B cell (primary cell): ENCODE measurements at regions of chr7 and their contacts with region 1.

Region 1: GRCh38 chr7:2529161-2530070 is 9.8 kb downstream of the LFNG start:
- DNase-seq: peak; percentile 94
- ATAC-seq: peak; percentile 65
- H3K4me3 ChIP-seq: peak overlapping the region in 4 of 5 experiments; percentile 38 to 52 (median 43)
- H3K4me3 Mint-ChIP-seq: peak overlapping the region; percentile 90
- H3K27ac ChIP-seq: peak overlapping the region; percentile 97
- H3K27ac Mint-ChIP-seq: peak overlapping the region; percentile 99
- H3K4me1 ChIP-seq: peaks cover 66 to 74% of the 10 kb centered on the region in 2 donors
- H3K4me1 Mint-ChIP-seq: peaks cover 67% of the 10 kb centered on the region
- H3K27me3 ChIP-seq: no peaks in the 10 kb centered on the region
- H3K27me3 Mint-ChIP-seq: no peaks in the 10 kb centered on the region
- CTCF ChIP-seq: no peak

Region 2: DNA sequence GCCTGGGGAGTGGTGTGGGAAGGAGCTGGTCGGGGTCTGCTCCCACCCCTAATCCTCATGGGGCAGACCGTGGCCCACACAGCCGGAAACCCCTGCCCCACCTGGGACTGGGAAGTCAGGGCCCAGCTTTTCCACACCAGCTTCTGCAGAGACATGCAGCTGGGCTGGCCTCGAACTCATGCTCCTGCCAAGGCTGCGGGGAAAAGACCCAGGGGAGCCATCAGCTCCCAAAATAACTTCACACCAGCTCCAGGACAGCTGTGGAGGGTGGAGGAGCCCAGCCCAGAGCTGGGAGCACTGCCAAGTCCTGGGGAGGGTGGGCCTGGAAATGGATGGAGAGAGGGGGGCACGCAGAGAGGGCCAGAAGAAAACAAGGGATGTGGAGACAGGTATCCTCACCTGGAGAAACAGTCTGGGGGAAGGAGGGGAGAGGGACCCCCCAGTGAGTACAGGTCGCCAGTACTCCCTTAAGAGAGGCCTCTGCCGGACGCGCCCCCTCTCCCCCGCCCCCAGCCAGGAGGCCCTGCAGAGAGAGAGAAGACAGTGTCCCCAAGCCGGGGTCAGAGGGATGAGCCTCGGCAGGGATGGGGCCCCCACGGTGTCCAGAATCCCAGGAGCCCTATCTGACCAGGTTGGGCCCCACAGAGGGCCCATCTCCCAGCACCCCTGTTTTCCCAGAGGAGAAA is 41.7 kb before region 1 on chr7:
- CTCF ChIA-PET with region 1: no interaction called
- POLR2A ChIA-PET with region 1: interaction called, 13 read pairs
- intact Hi-C with region 1: no loop called
- DNase-seq: no peak
- ATAC-seq: no peak
- H3K4me3 ChIP-seq: no peak overlapping the region
- H3K4me3 Mint-ChIP-seq: no peak overlapping the region
- H3K27ac ChIP-seq: no peak overlapping the region
- H3K27ac Mint-ChIP-seq: no peak overlapping the region
- H3K4me1 ChIP-seq: no peaks in the 10 kb centered on the region
- H3K4me1 Mint-ChIP-seq: peaks cover 2% of the 10 kb centered on the region
- H3K27me3 ChIP-seq: peaks cover 0 to 14% (median 0%) of the 10 kb centered on the region in 4 experiments
- H3K27me3 Mint-ChIP-seq: no peaks in the 10 kb centered on the region
- CTCF ChIP-seq: no peak

Region 3: DNA sequence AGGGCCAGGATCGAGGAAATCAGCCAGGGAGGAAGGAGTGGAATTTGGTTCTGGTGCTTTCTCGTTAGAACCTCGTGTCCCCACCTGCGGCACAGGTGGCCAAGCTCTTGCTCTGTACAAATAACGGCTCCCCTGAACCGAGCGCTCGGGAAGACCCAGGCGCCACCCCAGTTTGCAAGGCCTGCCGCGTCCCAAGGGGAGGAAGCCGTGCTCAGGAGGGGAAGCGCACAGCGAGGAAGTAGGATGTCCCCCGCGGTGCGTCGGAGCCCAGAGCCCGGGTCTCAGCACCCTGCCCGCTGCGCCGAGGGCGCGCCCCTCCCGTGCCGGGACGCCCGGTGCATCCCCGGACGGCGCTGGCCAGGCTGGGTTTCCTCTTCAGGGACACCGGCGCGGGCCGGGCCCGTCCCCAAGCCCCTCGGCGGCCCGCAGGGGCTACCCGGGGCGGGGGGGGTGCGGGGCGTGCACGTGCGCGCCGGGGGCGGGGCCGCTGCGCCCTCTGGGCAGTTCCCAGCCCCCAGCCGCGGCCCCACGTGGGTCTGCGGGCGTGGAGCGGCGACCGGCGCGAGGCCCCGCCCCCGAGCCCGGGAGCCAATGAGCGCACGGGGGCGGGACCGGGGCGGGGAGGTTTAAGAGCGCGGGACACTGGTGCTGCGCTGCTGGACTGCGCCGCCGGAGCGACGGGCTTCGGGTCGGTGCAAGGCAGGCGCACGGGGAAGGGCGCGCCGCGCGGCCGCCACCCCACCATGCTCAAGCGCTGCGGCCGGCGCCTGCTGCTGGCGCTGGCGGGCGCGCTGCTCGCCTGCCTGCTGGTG is 10.1 kb before region 1 on chr7 and contains the start of gene LFNG:
- CTCF ChIA-PET with region 1: interaction called, 7 read pairs
- POLR2A ChIA-PET with region 1: interaction called, 52 read pairs
- intact Hi-C with region 1: loop called (anchors 1 kb)
- DNase-seq: peak; percentile 94
- ATAC-seq: peak; percentile 80
- H3K4me3 ChIP-seq: peak within 1 kb of the TSS; percentile 84 to 100 (median 97)
- H3K4me3 Mint-ChIP-seq: peak within 1 kb of the TSS; percentile 99
- H3K27ac ChIP-seq: peak within 1 kb of the TSS; percentile 62 to 75
- H3K27ac Mint-ChIP-seq: peak within 1 kb of the TSS; percentile 96
- H3K4me1 ChIP-seq: peaks cover 40 to 49% of the 10 kb centered on the region in 2 donors
- H3K4me1 Mint-ChIP-seq: peaks cover 52% of the 10 kb centered on the region
- H3K27me3 ChIP-seq: no peaks in the 10 kb centered on the region
- H3K27me3 Mint-ChIP-seq: no peaks in the 10 kb centered on the region
- CTCF ChIP-seq: no peak
- total RNA-seq, gene LFNG: 208 and 221 TPM in 2 replicates